Posterior vena cava (tissue), 2 donors: ENCODE measurements at regions of chr3 and their contacts with region 1.

Region 1: GRCh38 chr3:167899093-167899492 is 163.6 kb downstream of the SERPINI1 start:
- DNase-seq: no peak

Region 2: GRCh38 chr3:167394003-167394402 is 505.1 kb before region 1 on chr3:
- intact Hi-C with region 1: loop called in 1 of 2 experiments (anchors 10 kb)
- DNase-seq: no peak

Region 3: DNA sequence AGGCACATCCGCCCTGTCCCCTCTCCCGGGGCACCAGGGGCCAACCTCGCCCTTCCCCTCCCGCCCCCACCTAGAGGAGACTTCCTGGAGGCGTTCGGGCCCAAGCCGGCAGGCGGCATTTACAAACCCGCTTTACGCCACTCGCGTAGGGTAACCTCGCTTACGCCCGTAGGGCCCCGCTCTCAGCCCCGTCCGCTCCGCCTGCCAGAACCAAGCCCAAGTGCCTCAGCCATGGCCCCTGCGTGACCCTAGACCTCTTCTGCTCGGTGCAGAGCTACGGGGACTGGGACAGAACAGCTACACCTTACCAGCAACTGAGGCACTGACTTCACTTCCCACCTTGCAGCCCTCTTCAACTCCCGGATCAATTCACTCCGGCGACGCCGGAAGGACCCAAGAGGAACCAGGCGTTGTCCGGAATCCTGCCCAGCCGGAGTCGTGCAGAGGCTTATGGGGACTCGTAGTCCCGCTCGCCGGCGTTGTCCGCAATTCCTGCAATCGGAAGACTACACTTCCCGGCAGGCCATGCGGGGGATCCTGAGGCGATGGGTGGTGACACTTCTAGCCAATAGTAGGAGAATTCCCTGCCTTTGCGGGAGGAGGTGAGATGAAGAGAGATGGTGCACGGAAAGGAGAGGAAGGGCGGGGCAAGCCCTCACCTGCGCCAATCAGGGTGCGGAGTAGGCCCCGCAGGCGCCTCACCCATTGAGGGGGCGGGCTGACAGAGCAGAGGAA is 164.4 kb before region 1 on chr3 and contains the start of gene PDCD10:
- intact Hi-C with region 1: no loop called
- DNase-seq: peak; percentile 99
- total RNA-seq, gene PDCD10: 48.5 to 62.0 TPM

Region 4: GRCh38 chr3:167978031-167978430 is 78.9 kb after region 1 on chr3:
- intact Hi-C with region 1: no loop called
- DNase-seq: no peak